OCI-LY7 (cell line): ENCODE measurements at regions of chr7 and their contacts with region 1.

Region 1: GRCh38 chr7:22250390-22250789 is 106.6 kb downstream of the RAPGEF5 start:
- DNase-seq: no peak
- H3K4me3 ChIP-seq: no peak overlapping the region
- H3K27ac ChIP-seq: no peak overlapping the region
- H3K4me1 ChIP-seq: no peaks in the 10 kb centered on the region
- CTCF ChIP-seq: no peak

Region 2: DNA sequence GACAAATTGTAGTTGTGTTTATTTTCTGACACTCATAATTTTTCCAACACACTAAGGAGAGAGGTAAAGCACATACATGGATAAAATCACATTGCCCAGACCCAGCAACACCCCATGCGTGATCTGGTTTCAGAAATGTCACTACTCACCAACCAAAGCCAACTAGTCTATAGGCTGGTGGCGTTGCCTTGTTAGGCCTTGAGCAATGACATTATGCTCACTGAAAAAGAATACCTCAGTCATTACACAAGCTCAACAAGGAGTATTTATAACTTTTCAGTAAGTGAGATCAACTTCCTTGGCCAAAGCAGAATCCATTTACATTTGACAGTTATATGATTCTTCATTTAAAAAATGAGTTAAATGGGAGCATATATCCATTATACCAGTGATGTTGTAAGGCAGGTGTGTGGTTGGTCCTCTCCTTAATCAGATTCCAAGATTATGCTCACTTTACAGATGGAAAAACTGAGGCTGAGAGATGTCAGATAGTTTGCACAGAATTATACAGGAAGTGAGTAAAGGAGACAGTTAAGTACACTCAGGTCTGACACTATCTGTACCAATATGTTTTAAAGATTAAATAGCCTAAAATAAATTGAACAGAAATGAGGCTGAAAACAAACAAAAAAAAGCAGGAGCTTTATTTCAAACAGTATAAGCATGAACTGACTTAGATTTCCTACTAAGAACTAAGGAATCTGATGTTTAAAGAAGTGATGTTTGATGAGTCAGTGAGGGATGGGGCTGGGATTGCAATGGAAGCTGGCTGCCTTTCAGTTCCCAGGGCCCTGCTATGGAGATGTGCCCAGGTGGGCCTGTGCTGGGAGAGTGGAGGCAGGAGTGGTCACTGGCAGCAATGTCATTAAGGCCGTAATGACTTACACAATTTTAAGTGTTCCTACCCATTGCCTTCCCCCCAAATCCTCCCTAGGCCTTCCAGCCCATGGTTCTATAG is 11.8 kb before region 1 on chr7:
- CTCF ChIA-PET with region 1: no interaction called
- POLR2A ChIA-PET with region 1: interaction called, 11 read pairs
- intact Hi-C with region 1: no loop called
- DNase-seq: no peak
- H3K4me3 ChIP-seq: no peak overlapping the region
- H3K27ac ChIP-seq: no peak overlapping the region
- H3K4me1 ChIP-seq: no peaks in the 10 kb centered on the region
- CTCF ChIP-seq: no peak